Aorta (tissue), 5 donors: ENCODE measurements at regions of chrX and their contacts with region 1.

Region 1: DNA sequence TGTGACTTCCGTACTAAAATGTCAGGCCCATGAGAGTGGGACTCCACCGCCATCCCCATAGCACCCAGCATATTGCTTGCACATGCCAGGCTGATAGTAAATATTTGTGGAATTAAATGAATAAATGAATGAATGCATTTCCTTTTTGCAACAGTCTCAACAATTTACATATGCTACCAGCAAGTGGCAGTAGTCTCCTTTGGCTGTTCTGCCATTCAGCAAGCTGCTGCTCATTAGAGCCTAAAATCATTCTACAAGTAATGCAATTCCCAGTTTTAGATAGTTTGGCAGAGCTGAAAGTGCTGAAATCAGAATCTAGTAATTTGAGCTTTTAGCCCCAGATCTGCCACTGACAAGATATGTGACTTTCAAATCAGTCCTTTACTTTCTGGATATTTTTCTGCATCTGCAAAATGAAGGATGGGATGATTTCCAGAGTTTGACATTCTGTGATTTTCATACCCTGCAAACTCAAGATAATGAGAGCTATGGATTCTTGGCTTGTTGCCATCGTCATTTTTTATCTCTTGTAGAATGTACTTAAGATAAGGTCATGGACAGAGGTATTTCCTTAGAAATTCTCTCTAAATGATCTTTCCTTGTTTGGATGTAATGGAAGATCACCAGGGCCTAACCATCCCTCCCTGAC is 35.7 kb upstream of the INTS6L start:
- DNase-seq: no peak
- ATAC-seq: no peak
- H3K4me3 ChIP-seq: no peak overlapping the region
- H3K27ac ChIP-seq: no peak overlapping the region
- H3K4me1 ChIP-seq: no peaks in the 10 kb centered on the region
- H3K27me3 ChIP-seq: no peaks in the 10 kb centered on the region

Region 2: DNA sequence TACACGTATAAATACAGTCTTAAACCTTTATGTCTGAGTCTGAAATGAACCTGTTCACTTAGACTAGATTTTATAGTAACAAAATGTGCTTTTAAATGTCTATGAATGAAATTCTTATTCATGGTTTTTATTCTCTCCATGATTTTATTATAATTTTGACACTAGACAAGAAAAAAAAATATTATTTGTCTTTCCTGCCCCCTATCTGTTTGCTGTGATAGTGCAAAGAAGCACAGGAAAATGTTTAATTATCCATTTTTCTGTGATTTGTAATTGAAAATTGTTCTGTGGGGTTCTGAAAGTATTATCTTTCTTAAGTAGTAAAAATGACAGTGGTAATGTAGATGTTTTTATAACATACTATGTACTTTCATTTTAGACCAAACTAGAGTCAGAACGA is 87.7 kb after region 1 on chrX:
- intact Hi-C with region 1: loop called in 1 of 2 experiments (anchors 10 kb)
- DNase-seq: no peak
- ATAC-seq: no peak
- H3K4me3 ChIP-seq: no peak overlapping the region
- H3K27ac ChIP-seq: no peak overlapping the region
- H3K4me1 ChIP-seq: no peaks in the 10 kb centered on the region
- H3K27me3 ChIP-seq: no peaks in the 10 kb centered on the region

Region 3: GRCh38 chrX:135596495-135596894 is 111.7 kb after region 1 on chrX:
- intact Hi-C with region 1: loop called in 1 of 2 experiments (anchors 5 kb)
- DNase-seq: peak; percentile 49 to 69
- ATAC-seq: peak; percentile 44
- H3K4me3 ChIP-seq: no peak overlapping the region
- H3K27ac ChIP-seq: no peak overlapping the region
- H3K4me1 ChIP-seq: no peaks in the 10 kb centered on the region
- H3K27me3 ChIP-seq: no peaks in the 10 kb centered on the region